Adrenal gland (tissue), 19 donors: ENCODE measurements at regions of chr18 and their contacts with region 1.

Region 1: GRCh38 chr18:59459369-59460079 is 100.5 kb upstream of the LMAN1 start:
- DNase-seq: no peak
- H3K4me3 ChIP-seq: no peak overlapping the region
- H3K27ac ChIP-seq: no peak overlapping the region
- H3K4me1 ChIP-seq: peaks cover 0 to 8% of the 10 kb centered on the region in 2 donors
- H3K27me3 ChIP-seq: no peaks in the 10 kb centered on the region
- CTCF ChIP-seq: peak; percentile 54 to 75 (median 67)
- POLR2A ChIP-seq: no peak

Region 2: DNA sequence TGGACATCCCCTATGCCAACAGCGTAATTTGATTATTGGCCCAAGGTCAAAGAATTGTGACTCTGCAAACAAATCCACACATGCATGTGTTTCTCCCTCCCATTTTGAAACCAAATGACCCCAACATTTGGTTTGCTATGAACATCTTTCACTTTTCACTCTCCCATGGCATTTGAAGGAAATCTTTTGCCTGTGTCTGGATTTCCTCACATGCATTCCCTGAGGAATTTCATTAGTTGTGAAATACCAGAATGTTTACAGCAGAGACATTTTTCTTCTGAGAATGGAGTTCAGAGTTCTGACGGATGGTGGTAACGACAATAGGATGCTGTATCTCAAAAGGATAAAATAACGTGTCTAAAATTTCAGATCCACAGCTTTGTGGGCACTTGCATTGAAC is 40.1 kb before region 1 on chr18:
- intact Hi-C with region 1: no loop called
- DNase-seq: no peak
- H3K4me3 ChIP-seq: no peak overlapping the region
- H3K27ac ChIP-seq: no peak overlapping the region
- H3K4me1 ChIP-seq: no peaks in the 10 kb centered on the region
- H3K27me3 ChIP-seq: no peaks in the 10 kb centered on the region
- CTCF ChIP-seq: no peak
- POLR2A ChIP-seq: no peak

Region 3: GRCh38 chr18:59547581-59548182 is 88.2 kb after region 1 on chr18:
- intact Hi-C with region 1: loop called in 1 of 2 experiments (anchors 10 kb)
- DNase-seq: peak in 1 of 7 donors; percentile 19
- H3K4me3 ChIP-seq: no peak overlapping the region
- H3K27ac ChIP-seq: no peak overlapping the region
- H3K4me1 ChIP-seq: peaks cover 14 to 17% of the 10 kb centered on the region in 2 donors
- H3K27me3 ChIP-seq: no peaks in the 10 kb centered on the region
- CTCF ChIP-seq: peak in 1 of 6 experiments; percentile 30
- POLR2A ChIP-seq: no peak

Region 4: DNA sequence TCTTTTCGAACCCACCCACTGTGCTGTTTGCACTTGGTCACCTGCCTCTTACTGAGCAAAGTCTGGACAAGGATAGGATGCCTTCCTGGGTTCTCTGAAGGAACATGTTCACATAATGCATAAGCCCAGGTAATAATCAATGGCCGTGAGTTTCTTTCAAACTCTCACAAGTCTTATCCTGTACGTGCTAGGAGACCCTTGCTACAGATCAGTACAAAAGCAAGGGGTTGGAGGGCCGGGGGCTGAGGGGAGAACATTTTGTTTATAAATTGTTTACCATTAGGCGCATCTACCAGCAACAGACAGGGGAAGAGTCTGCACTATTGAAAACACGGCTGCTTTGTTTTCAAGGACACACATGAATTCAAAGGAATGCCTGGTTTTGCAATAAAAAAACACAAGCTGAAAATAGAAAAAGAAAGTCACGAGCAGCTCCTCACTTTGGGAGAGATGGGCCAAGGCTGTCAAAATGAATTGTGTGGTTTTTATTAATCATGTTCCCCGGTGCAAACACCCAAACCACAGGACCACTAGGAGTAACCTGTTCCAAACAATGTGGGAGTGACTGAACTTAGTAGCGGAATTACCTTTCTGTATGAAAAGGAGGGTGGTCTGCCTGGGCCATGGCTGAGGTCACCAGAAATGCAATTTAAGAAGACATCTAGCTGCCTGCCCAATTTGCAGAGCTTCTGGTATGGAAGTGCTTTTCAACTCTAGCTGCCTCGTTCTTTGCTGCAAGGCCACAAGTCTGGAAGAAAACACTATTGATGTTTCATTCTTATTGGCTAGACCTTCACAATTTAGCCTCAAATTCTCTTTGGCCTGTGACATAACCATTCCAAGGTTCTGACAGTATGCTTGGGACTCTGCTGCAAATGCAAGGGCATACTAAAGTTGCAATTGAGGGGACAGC is 164.2 kb after region 1 on chr18:
- intact Hi-C with region 1: loop called in 1 of 2 experiments (anchors 10 kb)
- DNase-seq: peak in 6 of 7 donors; percentile 47 to 67 (median 50)
- H3K4me3 ChIP-seq: peak overlapping the region in 1 of 4 donors; percentile 8
- H3K27ac ChIP-seq: peak overlapping the region; percentile 4 to 78 (median 63)
- H3K4me1 ChIP-seq: peaks cover 18 to 20% of the 10 kb centered on the region in 2 donors
- H3K27me3 ChIP-seq: no peaks in the 10 kb centered on the region
- CTCF ChIP-seq: peak in 1 of 6 experiments; percentile 24
- POLR2A ChIP-seq: peak in 1 of 2 donors; percentile 32

Region 5: GRCh38 chr18:59823596-59824195 is 364.2 kb after region 1 on chr18:
- intact Hi-C with region 1: loop called (anchors 5 to 10 kb)
- DNase-seq: peak; percentile 81 to 93 (median 84)
- H3K4me3 ChIP-seq: no peak overlapping the region
- H3K27ac ChIP-seq: no peak overlapping the region
- H3K4me1 ChIP-seq: peaks cover 0 to 6% of the 10 kb centered on the region in 2 donors
- H3K27me3 ChIP-seq: no peaks in the 10 kb centered on the region
- CTCF ChIP-seq: peak; percentile 81 to 93 (median 91)
- POLR2A ChIP-seq: no peak